GM12878 (cell line): ENCODE measurements at regions of chr4 and their contacts with region 1.

Region 1: DNA sequence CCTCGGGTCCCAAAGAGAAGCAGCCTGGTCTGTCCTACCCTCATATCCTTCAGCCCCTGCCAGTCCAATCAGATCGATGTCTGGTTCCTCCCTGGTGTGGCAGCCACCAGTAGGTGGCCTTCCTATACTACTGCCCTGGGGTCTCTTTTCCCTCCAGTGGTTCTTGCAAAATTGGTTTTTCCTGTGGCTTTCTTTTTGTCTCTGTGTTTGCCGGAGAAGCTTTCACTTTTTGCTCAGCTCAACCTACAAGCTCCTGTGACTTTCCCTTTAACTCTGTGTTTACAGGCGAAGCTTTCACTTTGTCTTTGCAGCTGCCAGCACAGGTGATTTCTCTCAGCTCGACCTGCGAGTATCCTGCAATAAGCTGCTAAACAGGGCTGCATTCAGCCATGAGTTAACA is 46.8 kb downstream of the UGT2A3 start:
- DNase-seq: peak; percentile 21
- ATAC-seq: peak; percentile 83
- H3K4me3 ChIP-seq: no peak overlapping the region
- H3K27ac ChIP-seq: no peak overlapping the region
- H3K4me1 ChIP-seq: no peaks in the 10 kb centered on the region
- H3K27me3 ChIP-seq: no peaks in the 10 kb centered on the region
- CTCF ChIP-seq: peak; percentile 26 to 36 (median 35); a peak in 3 of 6 replicates
- EP300 ChIP-seq: no peak
- POLR2A ChIP-seq: no peak
- RAD21 ChIP-seq: peak; percentile 48

Region 2: GRCh38 chr4:68271851-68272756 is 632.7 kb before region 1 on chr4:
- CTCF ChIA-PET with region 1: no interaction called
- POLR2A ChIA-PET with region 1: no interaction called
- RAD21 ChIA-PET with region 1: no interaction called
- SMC1A ChIA-PET with region 1: no interaction called
- in situ Hi-C with region 1: no loop called
- intact Hi-C with region 1: loop called (anchors 10 kb)
- DNase-seq: no peak
- ATAC-seq: peak; percentile 80
- H3K4me3 ChIP-seq: no peak overlapping the region
- H3K27ac ChIP-seq: no peak overlapping the region
- H3K4me1 ChIP-seq: no peaks in the 10 kb centered on the region
- H3K27me3 ChIP-seq: no peaks in the 10 kb centered on the region; a peak in 1 of 4 replicates
- CTCF ChIP-seq: peak; percentile 48 to 66 (median 53); a peak in 5 of 6 replicates
- EP300 ChIP-seq: no peak
- POLR2A ChIP-seq: no peak
- RAD21 ChIP-seq: peak; percentile 72

Region 3: DNA sequence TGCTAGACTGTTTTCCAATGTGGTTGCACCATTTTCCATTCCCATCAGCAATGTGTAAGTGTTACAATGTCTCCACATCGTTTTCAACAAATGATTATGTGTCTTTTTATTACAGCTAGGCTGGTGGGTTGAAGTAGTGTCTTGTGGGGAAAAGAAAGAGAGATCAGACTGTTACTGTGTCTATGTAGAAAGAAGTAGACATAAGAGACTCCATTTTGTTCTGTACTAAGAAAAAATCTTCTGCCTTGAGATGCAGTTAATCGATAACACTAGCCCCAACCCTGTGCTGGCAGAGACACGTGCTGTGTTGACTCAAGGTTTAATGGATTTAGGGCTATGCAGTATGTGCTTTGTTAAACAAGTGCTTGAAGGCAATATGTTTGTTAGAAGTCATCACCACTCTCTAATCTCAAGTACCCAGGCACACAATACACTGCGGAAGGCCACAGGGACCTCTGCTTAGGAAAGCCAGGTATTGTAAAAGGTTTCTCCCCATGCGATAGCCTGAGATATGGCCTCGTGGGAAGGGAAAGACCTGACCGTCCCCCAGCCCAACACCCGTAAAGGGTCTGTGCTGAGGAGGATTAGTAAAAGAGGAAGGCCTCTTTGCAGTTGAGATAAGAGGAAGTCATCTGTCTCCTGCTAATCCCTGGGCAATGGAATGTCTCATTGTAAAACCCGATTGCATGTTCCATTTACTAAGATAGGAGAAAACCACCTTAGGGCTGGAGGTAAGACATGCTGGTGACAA is 211.3 kb before region 1 on chr4:
- CTCF ChIA-PET with region 1: no interaction called
- POLR2A ChIA-PET with region 1: no interaction called
- RAD21 ChIA-PET with region 1: no interaction called
- SMC1A ChIA-PET with region 1: no interaction called
- in situ Hi-C with region 1: no loop called
- intact Hi-C with region 1: no loop called
- DNase-seq: no peak
- ATAC-seq: no peak
- H3K4me3 ChIP-seq: no peak overlapping the region
- H3K27ac ChIP-seq: no peak overlapping the region
- H3K4me1 ChIP-seq: no peaks in the 10 kb centered on the region
- H3K27me3 ChIP-seq: no peaks in the 10 kb centered on the region
- CTCF ChIP-seq: no peak
- EP300 ChIP-seq: no peak
- POLR2A ChIP-seq: no peak
- RAD21 ChIP-seq: no peak

Region 4: GRCh38 chr4:68748181-68748991 is 156.4 kb before region 1 on chr4:
- CTCF ChIA-PET with region 1: no interaction called
- POLR2A ChIA-PET with region 1: no interaction called
- RAD21 ChIA-PET with region 1: no interaction called
- SMC1A ChIA-PET with region 1: no interaction called
- in situ Hi-C with region 1: no loop called
- intact Hi-C with region 1: no loop called
- DNase-seq: no peak
- ATAC-seq: peak; percentile 75
- H3K4me3 ChIP-seq: no peak overlapping the region
- H3K27ac ChIP-seq: no peak overlapping the region
- H3K4me1 ChIP-seq: no peaks in the 10 kb centered on the region
- H3K27me3 ChIP-seq: no peaks in the 10 kb centered on the region
- CTCF ChIP-seq: no peak
- EP300 ChIP-seq: no peak
- POLR2A ChIP-seq: no peak
- RAD21 ChIP-seq: no peak

Region 5: DNA sequence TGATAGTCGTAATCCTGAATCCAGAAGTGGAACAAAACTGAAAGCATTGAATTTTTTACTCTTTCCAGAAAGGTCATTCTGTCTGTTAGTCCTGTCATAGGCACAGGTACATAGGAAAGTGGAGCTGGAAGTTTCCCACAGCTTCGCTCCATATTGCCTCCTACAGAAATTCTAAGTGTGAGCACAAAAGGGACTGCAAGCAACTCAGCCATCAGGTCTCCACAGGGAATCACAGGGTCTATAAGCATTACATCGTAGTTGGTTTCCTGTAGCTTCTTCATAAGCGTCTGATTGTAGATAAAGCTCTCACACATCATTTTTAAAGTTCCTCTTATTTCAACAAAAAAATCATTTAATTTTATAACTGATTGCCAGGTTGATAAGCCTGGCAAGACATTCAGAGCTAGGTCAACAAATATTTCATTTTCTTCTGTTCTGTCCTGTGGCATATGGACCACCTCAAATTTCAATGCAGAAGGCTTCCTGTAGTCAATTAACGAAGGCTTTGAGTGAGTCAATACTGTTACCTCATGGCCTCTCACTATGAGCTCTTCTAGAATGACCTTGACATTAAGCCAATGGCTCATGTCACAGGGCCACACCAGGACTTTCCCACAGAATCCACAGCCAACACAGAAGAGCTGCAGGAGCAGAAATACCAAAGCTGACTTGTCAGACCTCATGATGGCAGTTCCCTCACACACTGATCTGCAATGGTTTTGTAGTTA is 46.5 kb after region 1 on chr4 and contains the start of gene UGT2A3:
- CTCF ChIA-PET with region 1: interaction called, 7 read pairs
- POLR2A ChIA-PET with region 1: interaction called, 3 read pairs
- RAD21 ChIA-PET with region 1: interaction called, 10 read pairs
- SMC1A ChIA-PET with region 1: interaction called, 9 read pairs
- in situ Hi-C with region 1: no loop called
- intact Hi-C with region 1: no loop called
- DNase-seq: peak; percentile 23
- ATAC-seq: peak; percentile 79
- H3K4me3 ChIP-seq: no peak within 1 kb of the TSS
- H3K27ac ChIP-seq: no peak within 1 kb of the TSS
- H3K4me1 ChIP-seq: no peaks in the 10 kb centered on the region
- H3K27me3 ChIP-seq: no peaks in the 10 kb centered on the region
- CTCF ChIP-seq: no peak
- EP300 ChIP-seq: no peak
- POLR2A ChIP-seq: no peak
- RAD21 ChIP-seq: no peak
- polyA plus RNA-seq, gene UGT2A3: 0.05 to 0.18 TPM

Region 6: GRCh38 chr4:69044247-69044646 is 139.5 kb after region 1 on chr4:
- CTCF ChIA-PET with region 1: interaction called, 6 read pairs
- POLR2A ChIA-PET with region 1: no interaction called
- RAD21 ChIA-PET with region 1: interaction called, 17 read pairs
- SMC1A ChIA-PET with region 1: interaction called, 13 read pairs
- in situ Hi-C with region 1: no loop called
- intact Hi-C with region 1: no loop called
- DNase-seq: no peak
- ATAC-seq: peak; percentile 55
- H3K4me3 ChIP-seq: no peak overlapping the region
- H3K27ac ChIP-seq: no peak overlapping the region
- H3K4me1 ChIP-seq: no peaks in the 10 kb centered on the region
- H3K27me3 ChIP-seq: no peaks in the 10 kb centered on the region
- CTCF ChIP-seq: no peak
- EP300 ChIP-seq: no peak
- POLR2A ChIP-seq: no peak
- RAD21 ChIP-seq: no peak

Region 7: GRCh38 chr4:69167300-69167699 is 262.5 kb after region 1 on chr4:
- CTCF ChIA-PET with region 1: interaction called, 18 read pairs
- POLR2A ChIA-PET with region 1: no interaction called
- RAD21 ChIA-PET with region 1: interaction called, 19 read pairs
- SMC1A ChIA-PET with region 1: interaction called, 16 read pairs
- in situ Hi-C with region 1: loop called (anchors 10 kb)
- intact Hi-C with region 1: no loop called
- DNase-seq: no peak
- ATAC-seq: no peak
- H3K4me3 ChIP-seq: no peak overlapping the region
- H3K27ac ChIP-seq: no peak overlapping the region
- H3K4me1 ChIP-seq: no peaks in the 10 kb centered on the region
- H3K27me3 ChIP-seq: no peaks in the 10 kb centered on the region
- CTCF ChIP-seq: no peak
- EP300 ChIP-seq: no peak
- POLR2A ChIP-seq: no peak
- RAD21 ChIP-seq: no peak